CD4-positive, alpha-beta memory T cell (primary cell): ENCODE measurements at regions of chr6 and their contacts with region 1.

Region 1: GRCh38 chr6:34248727-34249551 is at the start of gene SMIM29:
- DNase-seq: peak; percentile 96 to 98 (median 97)
- H3K4me3 ChIP-seq: peak within 1 kb of the TSS; percentile 82 to 86
- H3K4me3 Mint-ChIP-seq: peak within 1 kb of the TSS; percentile 91 to 97 (median 96)
- H3K27ac ChIP-seq: peak within 1 kb of the TSS; percentile 90
- H3K27ac Mint-ChIP-seq: peak within 1 kb of the TSS; percentile 91 to 99 (median 98)
- H3K4me1 ChIP-seq: peaks cover 35% of the 10 kb centered on the region
- H3K4me1 Mint-ChIP-seq: peaks cover 16 to 36% (median 25%) of the 10 kb centered on the region in 4 donors
- H3K27me3 ChIP-seq: no peaks in the 10 kb centered on the region
- H3K27me3 Mint-ChIP-seq: no peaks in the 10 kb centered on the region
- total RNA-seq, gene SMIM29: 29.7 to 30.1 TPM

Region 2: DNA sequence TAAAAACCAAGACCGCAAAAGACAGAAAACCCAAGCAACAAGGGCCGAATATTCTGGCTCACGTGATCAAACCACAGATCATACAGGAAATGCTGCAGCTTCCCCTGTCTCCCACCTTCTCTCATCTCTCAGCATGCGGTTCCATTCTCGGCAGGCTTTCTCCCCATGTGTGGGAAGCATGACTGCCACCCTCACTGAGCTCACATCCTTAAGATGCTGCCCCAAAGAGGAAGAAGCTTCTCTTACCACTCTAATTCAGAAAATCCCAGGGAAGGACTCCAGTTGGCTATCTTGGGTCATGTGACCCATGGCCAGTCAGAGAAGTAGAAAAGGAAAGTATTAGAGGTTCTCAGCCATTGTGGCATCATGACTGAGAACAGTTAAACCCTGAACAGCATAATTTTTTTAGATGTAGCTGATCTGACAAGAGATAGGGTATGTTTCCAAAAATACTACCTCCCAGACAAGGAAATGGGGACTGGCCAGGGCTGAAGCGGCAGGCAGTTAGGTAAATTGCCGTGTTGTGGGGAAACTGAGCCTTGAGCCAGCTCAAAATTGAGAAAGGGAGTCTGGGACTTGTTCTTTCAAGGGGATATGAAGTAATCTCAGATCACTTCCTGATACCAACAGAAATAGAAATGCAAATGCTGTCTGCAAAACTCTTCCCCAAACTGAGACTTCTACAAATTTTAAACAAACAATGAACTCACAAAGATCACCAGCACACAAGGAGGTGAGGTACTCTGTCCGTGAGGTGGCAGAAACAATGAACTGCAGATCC is 66.0 kb before region 1 on chr6:
- CTCF ChIA-PET with region 1: interaction called, 3 read pairs
- POLR2A ChIA-PET with region 1: interaction called, 15 read pairs
- intact Hi-C with region 1: no loop called
- DNase-seq: peak; percentile 79 to 90 (median 81)
- H3K4me3 ChIP-seq: peak overlapping the region in 1 of 2 donors; percentile 32
- H3K4me3 Mint-ChIP-seq: peak overlapping the region; percentile 45 to 80 (median 74)
- H3K27ac ChIP-seq: peak overlapping the region; percentile 33
- H3K27ac Mint-ChIP-seq: peak overlapping the region; percentile 72 to 95 (median 82)
- H3K4me1 ChIP-seq: peaks cover 25% of the 10 kb centered on the region
- H3K4me1 Mint-ChIP-seq: peaks cover 22 to 26% (median 24%) of the 10 kb centered on the region in 4 donors
- H3K27me3 ChIP-seq: no peaks in the 10 kb centered on the region
- H3K27me3 Mint-ChIP-seq: no peaks in the 10 kb centered on the region

Region 3: GRCh38 chr6:34223956-34224940 is 24.7 kb before region 1 on chr6:
- CTCF ChIA-PET with region 1: interaction called, 17 read pairs
- POLR2A ChIA-PET with region 1: interaction called, 47 read pairs
- intact Hi-C with region 1: loop called (anchors 1 kb)
- DNase-seq: peak; percentile 90 to 98 (median 94)
- H3K4me3 ChIP-seq: peak overlapping the region; percentile 77 to 86
- H3K4me3 Mint-ChIP-seq: peak overlapping the region; percentile 60 to 81 (median 74)
- H3K27ac ChIP-seq: peak overlapping the region; percentile 99
- H3K27ac Mint-ChIP-seq: peak overlapping the region; percentile 72 to 99 (median 96)
- H3K4me1 ChIP-seq: peaks cover 14% of the 10 kb centered on the region
- H3K4me1 Mint-ChIP-seq: peaks cover 4 to 13% (median 10%) of the 10 kb centered on the region in 4 donors
- H3K27me3 ChIP-seq: no peaks in the 10 kb centered on the region
- H3K27me3 Mint-ChIP-seq: no peaks in the 10 kb centered on the region

Region 4: DNA sequence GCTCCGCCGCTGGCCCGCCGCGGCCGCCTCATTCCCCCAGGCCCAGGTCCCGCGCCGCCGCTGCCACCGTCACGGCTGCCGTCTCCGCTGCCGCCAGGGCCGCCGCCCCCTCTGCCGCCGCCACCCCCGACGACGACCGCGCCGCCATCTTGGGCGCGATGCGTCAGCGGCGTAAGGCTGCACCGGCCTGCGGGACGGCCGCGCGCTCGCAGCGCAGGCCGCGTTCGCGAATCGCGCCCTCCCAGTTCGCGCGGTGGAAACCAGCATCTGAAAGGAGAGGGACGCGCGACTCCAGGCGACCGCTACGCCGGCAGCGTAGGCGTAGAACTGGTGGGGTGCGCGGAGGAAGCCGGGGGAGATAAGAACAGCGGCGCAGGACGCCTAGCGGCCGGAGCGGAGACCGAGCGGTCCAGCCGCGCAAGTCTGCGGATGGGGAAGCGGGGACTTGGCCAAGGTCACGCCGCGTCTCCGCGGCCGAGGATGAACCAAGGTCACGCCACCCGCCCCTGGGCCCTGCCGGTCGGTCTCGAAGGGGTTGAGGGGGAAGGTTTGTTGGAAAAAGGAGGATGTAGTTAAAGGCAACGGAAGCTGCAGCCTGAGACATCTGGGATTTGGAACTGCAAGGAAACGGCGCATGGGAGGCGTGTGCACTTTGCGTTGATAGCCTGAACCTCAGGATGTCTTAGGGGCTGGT is 143.7 kb after region 1 on chr6 and contains the start of gene NUDT3:
- CTCF ChIA-PET with region 1: interaction called, 29 read pairs
- POLR2A ChIA-PET with region 1: interaction called, 12 read pairs
- intact Hi-C with region 1: loop called (anchors 2 kb)
- DNase-seq: peak; percentile 92 to 97 (median 93)
- H3K4me3 ChIP-seq: peak within 1 kb of the TSS; percentile 73 to 78
- H3K4me3 Mint-ChIP-seq: peak within 1 kb of the TSS in 7 of 8 donors; percentile 74 to 99 (median 95)
- H3K27ac ChIP-seq: peak within 1 kb of the TSS; percentile 89
- H3K27ac Mint-ChIP-seq: peak within 1 kb of the TSS in 6 of 7 donors; percentile 75 to 96 (median 95)
- H3K4me1 ChIP-seq: peaks cover 24% of the 10 kb centered on the region
- H3K4me1 Mint-ChIP-seq: peaks cover 13 to 27% (median 18%) of the 10 kb centered on the region in 4 donors
- H3K27me3 ChIP-seq: no peaks in the 10 kb centered on the region
- H3K27me3 Mint-ChIP-seq: no peaks in the 10 kb centered on the region
- total RNA-seq, gene NUDT3: 25.9 TPM

Region 5: DNA sequence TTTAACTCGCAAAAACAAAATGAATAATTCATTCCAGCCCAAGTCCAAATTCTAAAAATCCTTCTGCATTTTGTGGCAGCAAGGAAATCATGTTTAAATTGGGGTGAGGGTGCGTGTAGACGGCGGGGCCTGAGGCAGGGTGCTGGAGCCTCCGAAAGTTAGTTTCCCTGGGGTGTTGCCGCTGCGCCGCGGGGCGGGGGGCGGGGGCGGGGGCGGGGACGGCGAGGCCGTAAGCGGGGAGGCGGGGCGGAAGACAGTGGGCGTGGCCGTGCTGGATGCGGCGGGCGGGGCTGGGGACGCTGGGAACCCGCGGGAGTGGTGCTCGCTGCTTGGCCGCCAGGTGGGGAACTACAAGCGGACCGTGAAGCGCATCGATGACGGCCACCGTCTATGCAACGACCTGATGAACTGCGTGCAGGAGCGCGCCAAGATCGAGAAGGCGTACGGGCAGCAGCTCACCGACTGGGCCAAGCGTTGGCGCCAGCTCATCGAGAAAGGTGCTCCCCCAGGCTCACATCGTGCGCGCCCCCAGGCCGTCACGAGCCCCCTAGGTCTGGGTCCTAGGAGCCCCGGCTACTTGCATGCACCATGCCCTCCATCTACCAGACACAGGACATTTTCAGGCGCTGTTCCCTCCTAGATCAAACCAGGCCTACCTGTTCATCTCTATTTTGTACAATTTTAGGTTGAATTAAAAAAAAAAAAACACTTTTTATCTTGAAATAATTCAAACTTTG is 278.2 kb after region 1 on chr6:
- CTCF ChIA-PET with region 1: interaction called, 4 read pairs
- POLR2A ChIA-PET with region 1: no interaction called
- intact Hi-C with region 1: loop called (anchors 2 kb)
- DNase-seq: peak; percentile 93 to 94 (median 93)
- H3K4me3 ChIP-seq: peak overlapping the region in 1 of 2 donors; percentile 20
- H3K4me3 Mint-ChIP-seq: peak overlapping the region in 6 of 8 donors; percentile 57 to 70 (median 64)
- H3K27ac ChIP-seq: no peak overlapping the region
- H3K27ac Mint-ChIP-seq: peak overlapping the region; percentile 27 to 78 (median 68)
- H3K4me1 ChIP-seq: peaks cover 15% of the 10 kb centered on the region
- H3K4me1 Mint-ChIP-seq: peaks cover 5 to 17% (median 7%) of the 10 kb centered on the region in 4 donors
- H3K27me3 ChIP-seq: no peaks in the 10 kb centered on the region
- H3K27me3 Mint-ChIP-seq: no peaks in the 10 kb centered on the region

Region 6: GRCh38 chr6:35139908-35140655 is 891.1 kb after region 1 on chr6:
- CTCF ChIA-PET with region 1: interaction called, 3 read pairs
- POLR2A ChIA-PET with region 1: no interaction called
- intact Hi-C with region 1: loop called (anchors 1 kb)
- DNase-seq: peak in 4 of 5 donors; percentile 36 to 44 (median 37)
- H3K4me3 ChIP-seq: no peak overlapping the region
- H3K4me3 Mint-ChIP-seq: peak overlapping the region in 7 of 8 donors; percentile 13 to 82 (median 49)
- H3K27ac ChIP-seq: no peak overlapping the region
- H3K27ac Mint-ChIP-seq: peak overlapping the region in 2 of 7 donors; percentile 43 to 63
- H3K4me1 ChIP-seq: peaks cover 15% of the 10 kb centered on the region
- H3K4me1 Mint-ChIP-seq: peaks cover 8 to 14% (median 10%) of the 10 kb centered on the region in 4 donors
- H3K27me3 ChIP-seq: peaks cover 7% of the 10 kb centered on the region
- H3K27me3 Mint-ChIP-seq: peaks cover 7 to 12% of the 10 kb centered on the region in 2 donors